A673 (cell line): ENCODE measurements at regions of chr2 and their contacts with region 1.

Region 1: DNA sequence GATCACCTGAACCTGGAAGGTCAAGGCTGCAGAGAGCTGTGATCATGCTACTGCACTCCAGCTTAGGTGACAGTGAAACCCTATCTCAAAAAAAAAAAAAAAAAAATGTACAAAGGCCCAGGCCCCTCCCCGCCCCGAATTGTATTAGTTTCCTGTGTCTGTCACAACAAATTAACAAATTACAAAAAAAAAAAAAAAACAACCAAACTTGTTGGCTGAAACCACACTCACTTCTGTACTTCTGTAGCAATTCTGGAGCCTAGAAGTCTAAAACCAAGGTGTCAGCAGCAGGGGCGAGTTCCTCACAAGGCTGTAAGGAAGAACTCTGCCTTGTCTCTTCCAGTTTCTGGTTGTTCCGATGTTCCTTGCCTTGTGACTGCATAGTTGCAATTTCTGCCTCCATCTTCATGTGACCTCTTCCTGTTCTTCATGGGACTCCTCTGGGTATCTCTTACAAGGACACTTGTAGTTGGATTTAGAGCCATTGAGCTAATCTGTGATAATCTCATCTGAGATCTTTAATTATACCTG is 100.8 kb upstream of the ZSWIM2 start:
- DNase-seq: no peak
- H3K4me3 ChIP-seq: no peak overlapping the region
- H3K27ac ChIP-seq: no peak overlapping the region
- H3K4me1 ChIP-seq: no peaks in the 10 kb centered on the region
- H3K27me3 ChIP-seq: no peaks in the 10 kb centered on the region
- CTCF ChIP-seq: no peak

Region 2: DNA sequence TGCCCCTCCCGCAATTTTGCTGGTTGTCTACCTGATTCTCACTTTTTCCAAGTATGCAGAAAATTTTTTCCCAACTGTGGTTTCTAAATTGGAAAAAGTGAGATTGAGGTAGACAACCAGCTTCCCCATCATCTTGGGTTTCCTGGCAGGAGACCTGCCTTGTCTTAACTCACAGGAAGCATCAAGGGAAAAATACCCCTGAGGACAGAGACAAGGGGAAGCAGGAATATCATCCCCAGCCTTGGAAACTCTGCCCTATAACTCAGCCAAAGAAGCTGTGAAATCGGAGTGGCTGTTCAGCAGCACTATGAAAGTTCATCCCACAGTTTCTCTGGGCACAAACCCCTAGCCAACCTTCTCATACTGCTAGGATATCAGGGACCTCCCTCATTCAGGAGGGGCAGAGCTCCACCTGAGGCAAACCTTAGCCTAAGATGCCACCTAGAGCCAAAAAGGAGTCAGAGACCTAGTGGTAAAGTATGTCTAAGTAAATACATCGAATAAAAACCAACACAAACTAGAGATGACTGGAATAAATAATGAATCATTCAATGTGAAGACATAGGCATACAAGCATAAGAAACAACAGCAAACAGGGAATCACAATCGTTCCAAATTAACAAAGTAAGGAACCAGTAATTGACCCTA is 169.0 kb before region 1 on chr2:
- CTCF ChIA-PET with region 1: no interaction called
- POLR2A ChIA-PET with region 1: no interaction called
- intact Hi-C with region 1: no loop called
- DNase-seq: peak; percentile 61
- H3K4me3 ChIP-seq: no peak overlapping the region
- H3K27ac ChIP-seq: no peak overlapping the region
- H3K4me1 ChIP-seq: no peaks in the 10 kb centered on the region
- H3K27me3 ChIP-seq: no peaks in the 10 kb centered on the region
- CTCF ChIP-seq: peak; percentile 45

Region 3: GRCh38 chr2:186919296-186919695 is 30.5 kb before region 1 on chr2:
- CTCF ChIA-PET with region 1: no interaction called
- POLR2A ChIA-PET with region 1: interaction called, 17 read pairs
- intact Hi-C with region 1: no loop called
- DNase-seq: peak; percentile 52
- H3K4me3 ChIP-seq: no peak overlapping the region
- H3K27ac ChIP-seq: no peak overlapping the region
- H3K4me1 ChIP-seq: no peaks in the 10 kb centered on the region
- H3K27me3 ChIP-seq: no peaks in the 10 kb centered on the region
- CTCF ChIP-seq: no peak